ENCODE measurements at regions of chr3 and their contacts with region 1.

Region 1: DNA sequence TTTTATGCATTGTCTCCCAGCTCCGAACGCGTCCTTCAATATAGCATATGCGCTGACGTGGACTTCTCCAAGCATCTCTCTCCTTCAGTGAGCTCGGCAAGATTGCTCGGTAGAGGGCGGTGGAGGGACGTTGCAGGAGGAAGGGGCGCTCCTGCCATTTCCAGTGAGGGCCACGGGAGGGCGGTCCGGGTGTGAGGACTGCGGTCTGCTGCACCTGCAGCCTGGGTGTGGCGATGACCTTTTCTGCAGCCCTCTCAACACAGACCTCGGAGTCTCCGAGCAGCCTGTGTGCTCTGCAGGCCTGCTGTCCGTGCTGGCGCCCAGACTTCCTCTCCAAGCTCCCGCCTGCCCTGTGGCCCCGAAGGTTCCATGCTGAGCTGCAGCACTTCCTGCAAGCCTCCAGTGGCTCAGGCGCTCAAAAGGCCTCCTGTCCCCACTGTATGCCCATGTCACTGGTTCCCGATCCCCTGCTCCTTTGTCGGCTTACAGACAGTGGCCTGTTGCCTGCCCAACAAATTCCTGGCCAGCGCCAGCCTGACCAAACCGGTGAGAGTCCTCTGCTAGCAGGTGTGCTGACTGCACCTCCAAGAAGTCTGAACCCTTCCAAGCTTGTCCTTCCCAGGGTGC is 8.9 kb upstream of the RTP3 start:
- DNase-seq: peak; percentile 92

Region 2: GRCh38 chr3:46558184-46559043 is 69.6 kb after region 1 on chr3:
- CTCF ChIA-PET with region 1: interaction called, 18 read pairs
- POLR2A ChIA-PET with region 1: interaction called, 3 read pairs
- DNase-seq: peak; percentile 83

Region 3: GRCh38 chr3:46629551-46630517 is 141.0 kb after region 1 on chr3:
- CTCF ChIA-PET with region 1: interaction called, 21 read pairs
- POLR2A ChIA-PET with region 1: interaction called, 7 read pairs
- DNase-seq: peak; percentile 64